H1 (cell line): ENCODE measurements at regions of chr13 and their contacts with region 1.

Region 1: DNA sequence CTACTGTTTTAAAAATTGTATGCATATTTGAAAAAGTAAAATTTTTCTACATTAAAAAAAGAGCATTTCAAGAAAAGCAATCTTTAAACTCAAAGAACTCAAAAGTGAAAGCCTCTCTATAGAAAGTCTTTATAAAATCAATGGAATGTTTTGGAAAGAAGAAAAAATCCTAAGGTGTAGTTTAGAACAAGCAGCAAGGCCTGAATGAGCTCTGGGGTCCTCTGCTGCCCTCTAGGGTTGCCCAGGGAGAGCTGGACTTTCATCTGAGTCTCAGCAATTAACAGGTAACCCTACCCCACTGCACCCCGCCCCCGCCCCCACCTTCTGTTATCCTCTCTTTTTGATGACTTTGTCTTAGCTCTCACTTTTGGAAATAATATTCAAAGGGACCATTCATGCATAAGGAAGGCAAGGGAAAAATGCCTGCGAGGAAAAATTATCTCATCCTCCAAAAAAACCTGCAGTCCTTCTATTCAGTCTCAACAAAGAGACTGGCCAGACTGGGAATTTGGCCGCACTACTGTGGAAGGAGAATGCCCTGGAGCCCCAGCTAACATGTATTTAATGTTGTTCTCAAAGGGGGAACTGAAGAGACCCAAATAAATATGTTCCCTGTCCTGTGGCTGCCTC is 24.1 kb downstream of the SLC25A30 start:
- DNase-seq: peak in 1 of 2 experiments; percentile 49
- H3K4me3 ChIP-seq: no peak overlapping the region
- H3K27ac ChIP-seq: no peak overlapping the region
- H3K4me1 ChIP-seq: no peaks in the 10 kb centered on the region
- H3K27me3 ChIP-seq: no peaks in the 10 kb centered on the region
- CTCF ChIP-seq: peak; percentile 66 to 73 (median 70)
- EP300 ChIP-seq: no peak
- POLR2A ChIP-seq: no peak
- RAD21 ChIP-seq: peak; percentile 73 to 75

Region 2: GRCh38 chr13:45406421-45406820 is 12.4 kb after region 1 on chr13:
- CTCF ChIA-PET with region 1: interaction called, 31 read pairs
- POLR2A ChIA-PET with region 1: interaction called, 3 read pairs
- DNase-seq: no peak
- H3K4me3 ChIP-seq: no peak overlapping the region
- H3K27ac ChIP-seq: no peak overlapping the region
- H3K4me1 ChIP-seq: no peaks in the 10 kb centered on the region
- H3K27me3 ChIP-seq: no peaks in the 10 kb centered on the region
- CTCF ChIP-seq: no peak
- EP300 ChIP-seq: no peak
- POLR2A ChIP-seq: no peak
- RAD21 ChIP-seq: no peak

Region 3: DNA sequence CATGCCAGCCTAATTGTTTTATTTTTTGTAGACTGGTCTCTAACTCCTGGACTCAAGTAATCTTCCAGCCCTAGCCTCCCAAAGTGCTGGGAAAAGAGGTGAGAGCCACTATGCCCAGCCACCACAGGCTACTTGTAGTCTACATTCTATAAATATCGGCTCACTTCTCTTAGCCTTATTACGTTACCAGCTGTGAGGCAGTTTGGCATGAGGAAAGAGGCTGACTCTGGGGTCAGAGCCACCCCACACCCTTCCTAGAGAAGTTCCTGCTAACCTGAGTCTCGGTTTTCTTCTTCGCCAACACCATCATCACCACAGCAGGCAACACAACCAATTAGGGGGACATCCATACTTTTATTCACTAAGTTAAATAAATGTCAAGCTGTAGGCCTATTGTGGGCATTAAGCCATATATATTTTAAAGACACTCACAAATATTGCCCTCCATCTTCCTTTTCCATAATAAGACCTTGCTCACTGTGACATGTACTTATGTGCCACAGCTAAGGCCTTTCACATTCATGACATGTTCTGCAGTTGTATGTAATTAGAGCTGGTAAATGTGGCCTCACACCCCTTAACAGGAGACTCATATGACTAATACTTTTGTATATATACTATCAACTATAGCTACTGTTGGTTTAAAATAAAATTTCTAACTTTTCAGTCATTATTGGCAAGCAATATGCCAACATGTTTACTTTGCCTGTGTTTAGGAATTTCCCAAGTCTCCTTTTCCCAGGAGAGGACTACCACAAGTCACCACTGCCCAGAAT is 18.4 kb after region 1 on chr13:
- CTCF ChIA-PET with region 1: interaction called, 31 read pairs
- POLR2A ChIA-PET with region 1: no interaction called
- DNase-seq: no peak
- H3K4me3 ChIP-seq: no peak overlapping the region
- H3K27ac ChIP-seq: no peak overlapping the region
- H3K4me1 ChIP-seq: no peaks in the 10 kb centered on the region; a peak in 1 of 7 replicates
- H3K27me3 ChIP-seq: peaks cover 0 to 3% (median 0%) of the 10 kb centered on the region in 4 experiments; a peak in 2 of 7 replicates
- CTCF ChIP-seq: no peak
- EP300 ChIP-seq: no peak
- POLR2A ChIP-seq: no peak
- RAD21 ChIP-seq: no peak